Heart left ventricle (tissue), 16 donors: ENCODE measurements at regions of chrX and their contacts with region 1.

Region 1: DNA sequence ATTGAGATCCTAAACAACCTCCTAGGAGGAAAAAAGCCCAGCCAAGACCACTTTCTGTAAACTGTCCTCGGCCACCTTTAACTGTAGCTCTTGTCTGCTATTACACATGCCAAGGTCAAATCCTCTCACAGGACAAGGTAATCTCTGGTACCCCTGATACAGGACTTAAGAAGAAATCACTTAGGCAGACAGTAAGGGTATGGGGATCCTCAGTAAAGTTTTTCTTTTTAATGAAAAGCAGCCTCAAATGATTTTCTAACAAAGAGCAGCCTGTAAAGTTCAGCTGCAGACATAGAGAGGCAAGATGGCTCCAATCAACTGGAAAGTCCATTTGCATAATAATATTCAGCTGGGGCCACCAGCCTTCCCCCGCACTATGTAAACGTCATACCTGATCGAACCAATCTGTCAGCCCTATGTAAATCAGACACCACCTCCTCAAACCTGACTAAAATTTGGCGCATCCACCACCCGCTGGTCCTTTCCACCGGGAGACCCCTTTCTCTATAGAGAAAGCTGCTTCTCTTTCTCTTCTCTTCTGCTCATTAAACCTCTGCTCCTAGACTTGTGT is 14.6 kb upstream of the MPP1 start:
- DNase-seq: no peak
- ATAC-seq: no peak
- H3K4me3 ChIP-seq: no peak overlapping the region
- H3K27ac ChIP-seq: no peak overlapping the region
- H3K4me1 ChIP-seq: no peaks in the 10 kb centered on the region
- H3K27me3 ChIP-seq: no peaks in the 10 kb centered on the region
- CTCF ChIP-seq: no peak
- POLR2A ChIP-seq: no peak

Region 2: DNA sequence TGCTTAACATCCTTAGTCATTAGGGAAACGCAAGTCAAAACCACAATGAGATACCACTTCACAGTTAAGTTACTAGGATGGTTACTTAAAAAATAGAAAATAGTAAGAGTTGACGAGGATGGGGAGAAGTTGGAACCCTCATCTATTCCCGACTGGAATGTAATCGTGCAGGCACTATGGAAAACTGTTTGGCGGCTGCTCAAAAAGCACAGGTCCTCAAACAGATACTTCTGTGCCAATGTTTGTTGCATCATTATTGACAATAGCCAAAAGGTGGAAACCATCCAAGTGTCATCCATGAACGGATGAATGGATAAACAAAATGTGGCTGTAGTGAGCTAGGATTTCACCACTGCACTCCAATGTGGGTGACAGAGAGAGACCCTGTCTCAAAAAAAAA is 212.5 kb before region 1 on chrX:
- intact Hi-C with region 1: no loop called
- DNase-seq: no peak
- ATAC-seq: no peak
- H3K4me3 ChIP-seq: no peak overlapping the region
- H3K27ac ChIP-seq: no peak overlapping the region
- H3K4me1 ChIP-seq: no peaks in the 10 kb centered on the region
- H3K27me3 ChIP-seq: peaks cover 0 to 7% (median 0%) of the 10 kb centered on the region in 9 donors
- CTCF ChIP-seq: no peak
- POLR2A ChIP-seq: no peak

Region 3: DNA sequence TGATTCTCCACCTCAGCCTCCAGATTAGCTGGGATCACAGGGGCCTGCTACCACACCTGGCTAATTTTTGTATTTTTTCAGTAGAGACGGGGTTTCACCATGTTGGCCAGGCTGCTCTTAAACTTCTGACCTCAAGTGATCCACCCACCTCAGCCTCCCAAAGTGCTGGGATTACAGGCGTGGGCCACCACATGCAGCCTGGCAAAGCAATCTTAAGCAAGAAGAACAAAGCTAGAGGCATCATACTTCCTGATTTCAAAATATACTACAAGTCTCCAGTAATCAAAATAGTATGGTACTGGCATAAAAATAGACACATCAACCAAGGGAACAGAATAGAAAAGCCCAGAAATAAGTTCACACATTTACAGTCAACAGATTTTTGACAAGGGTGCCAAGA is 53.5 kb after region 1 on chrX:
- intact Hi-C with region 1: loop called in 1 of 10 experiments (anchors 10 kb)
- DNase-seq: no peak
- ATAC-seq: no peak
- H3K4me3 ChIP-seq: no peak overlapping the region
- H3K27ac ChIP-seq: no peak overlapping the region
- H3K4me1 ChIP-seq: no peaks in the 10 kb centered on the region
- H3K27me3 ChIP-seq: no peaks in the 10 kb centered on the region
- CTCF ChIP-seq: no peak
- POLR2A ChIP-seq: no peak

Region 4: GRCh38 chrX:155218777-155219176 is 398.9 kb after region 1 on chrX:
- intact Hi-C with region 1: no loop called
- DNase-seq: no peak
- ATAC-seq: no peak
- H3K4me3 ChIP-seq: no peak overlapping the region
- H3K27ac ChIP-seq: no peak overlapping the region
- H3K4me1 ChIP-seq: peaks cover 0 to 27% (median 5%) of the 10 kb centered on the region in 12 donors
- H3K27me3 ChIP-seq: no peaks in the 10 kb centered on the region
- CTCF ChIP-seq: no peak
- POLR2A ChIP-seq: no peak